Activated naive CD4-positive, alpha-beta T cell treated with anti-CD3 and anti-CD28 coated beads for 36 hours (primary cell): ENCODE measurements at regions of chr3 and their contacts with region 1.

Region 1: GRCh38 chr3:100708967-100709841 is at the start of gene TFG:
- DNase-seq: peak; percentile 98
- H3K4me3 Mint-ChIP-seq: peak within 1 kb of the TSS; percentile 83
- H3K27ac Mint-ChIP-seq: peak within 1 kb of the TSS; percentile 97
- H3K4me1 Mint-ChIP-seq: peaks cover 39% of the 10 kb centered on the region
- H3K27me3 Mint-ChIP-seq: peaks cover 6% of the 10 kb centered on the region
- total RNA-seq, gene TFG: 45.6 to 46.0 TPM

Region 2: DNA sequence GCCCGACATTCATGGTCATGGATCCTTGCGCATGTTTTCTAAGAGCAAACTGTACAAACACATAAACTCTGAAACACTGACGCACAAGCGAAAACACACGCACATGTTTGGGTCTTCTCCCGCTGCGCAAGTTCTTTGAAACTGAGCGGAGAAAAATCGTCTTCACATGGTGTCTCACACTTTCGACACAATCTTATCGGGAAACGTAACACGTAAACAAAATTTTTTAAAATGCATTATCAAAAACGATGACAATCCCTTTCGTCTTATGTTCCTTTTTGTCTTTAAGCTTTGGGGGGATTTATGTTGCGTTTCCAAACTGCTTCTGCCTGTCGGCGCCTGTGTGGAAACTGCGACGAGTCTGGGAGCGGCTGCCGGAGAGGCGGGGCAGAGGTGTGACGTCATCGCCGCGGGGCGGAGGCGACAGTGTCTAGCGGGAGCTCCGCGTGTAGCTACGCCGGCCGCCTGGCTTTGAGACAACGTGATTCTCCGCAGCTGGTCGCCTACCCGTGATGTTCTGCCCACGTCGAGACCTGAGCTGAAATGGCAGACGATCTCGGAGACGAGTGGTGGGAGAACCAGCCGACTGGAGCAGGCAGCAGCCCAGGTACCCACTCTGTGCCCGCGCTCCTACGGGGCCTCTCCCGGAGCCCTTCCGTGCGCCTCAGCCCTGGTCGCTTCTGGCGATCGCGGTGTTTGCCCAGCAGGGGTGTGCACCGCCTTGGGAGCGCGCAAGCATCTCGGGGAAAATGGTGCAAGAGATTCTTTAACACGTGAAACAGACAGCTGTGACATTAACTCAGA is 891.6 kb before region 1 on chr3 and contains the start of gene CMSS1:
- CTCF ChIA-PET with region 1: no interaction called
- intact Hi-C with region 1: loop called (anchors 2 kb)
- DNase-seq: peak; percentile 95
- H3K4me3 Mint-ChIP-seq: peak within 1 kb of the TSS; percentile 98
- H3K27ac Mint-ChIP-seq: peak within 1 kb of the TSS; percentile 98
- H3K4me1 Mint-ChIP-seq: peaks cover 39% of the 10 kb centered on the region
- H3K27me3 Mint-ChIP-seq: no peaks in the 10 kb centered on the region
- total RNA-seq, gene CMSS1: 95.8 to 106 TPM

Region 3: DNA sequence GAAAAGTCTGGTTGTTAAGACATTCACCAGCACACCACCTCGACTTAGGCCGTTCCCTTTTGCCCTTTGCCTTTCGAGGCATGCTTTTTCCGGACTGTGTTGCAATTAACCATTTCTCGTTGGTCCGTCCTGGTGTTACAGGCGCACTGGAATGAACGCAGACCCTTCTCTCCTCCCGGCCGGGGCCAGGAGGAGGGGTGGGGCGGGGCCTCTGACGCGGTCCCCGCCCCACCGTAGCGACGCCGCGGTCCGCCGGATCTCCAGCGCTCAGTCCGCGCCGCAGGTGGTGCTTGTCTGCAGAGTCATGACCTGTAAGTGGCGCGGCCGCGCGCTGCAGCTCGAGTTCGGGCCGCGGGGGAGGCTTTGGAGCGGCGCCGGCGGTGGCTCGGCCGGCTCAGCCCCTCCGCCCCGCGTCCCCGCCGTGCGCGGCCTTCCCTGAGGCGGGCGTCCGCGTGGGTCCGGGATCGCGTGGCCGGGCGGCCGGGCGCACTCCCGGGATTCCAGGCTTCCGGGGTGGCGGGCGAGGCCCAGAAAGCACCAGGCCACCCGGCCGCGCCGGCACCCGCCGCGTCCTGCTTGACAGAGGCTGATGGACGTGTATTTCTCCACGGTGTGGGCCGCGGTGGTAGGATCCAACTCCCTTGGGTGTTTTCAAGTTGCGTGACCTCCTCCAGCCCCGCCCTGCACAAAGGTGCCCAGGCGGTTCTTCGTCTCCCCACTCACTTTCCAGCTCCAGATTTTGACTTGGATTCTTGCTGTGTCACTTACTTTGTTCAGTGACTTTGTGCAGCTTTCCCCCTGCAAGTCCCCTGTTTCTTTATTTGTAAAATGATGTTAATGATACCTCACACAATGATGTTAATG is 374.5 kb before region 1 on chr3 and contains the start of gene NIT2:
- CTCF ChIA-PET with region 1: no interaction called
- intact Hi-C with region 1: loop called (anchors 1 kb)
- DNase-seq: peak; percentile 82
- H3K4me3 Mint-ChIP-seq: peak within 1 kb of the TSS; percentile 86
- H3K27ac Mint-ChIP-seq: peak within 1 kb of the TSS; percentile 86
- H3K4me1 Mint-ChIP-seq: peaks cover 26% of the 10 kb centered on the region
- H3K27me3 Mint-ChIP-seq: no peaks in the 10 kb centered on the region
- total RNA-seq, gene NIT2: 69.1 to 76.0 TPM

Region 4: DNA sequence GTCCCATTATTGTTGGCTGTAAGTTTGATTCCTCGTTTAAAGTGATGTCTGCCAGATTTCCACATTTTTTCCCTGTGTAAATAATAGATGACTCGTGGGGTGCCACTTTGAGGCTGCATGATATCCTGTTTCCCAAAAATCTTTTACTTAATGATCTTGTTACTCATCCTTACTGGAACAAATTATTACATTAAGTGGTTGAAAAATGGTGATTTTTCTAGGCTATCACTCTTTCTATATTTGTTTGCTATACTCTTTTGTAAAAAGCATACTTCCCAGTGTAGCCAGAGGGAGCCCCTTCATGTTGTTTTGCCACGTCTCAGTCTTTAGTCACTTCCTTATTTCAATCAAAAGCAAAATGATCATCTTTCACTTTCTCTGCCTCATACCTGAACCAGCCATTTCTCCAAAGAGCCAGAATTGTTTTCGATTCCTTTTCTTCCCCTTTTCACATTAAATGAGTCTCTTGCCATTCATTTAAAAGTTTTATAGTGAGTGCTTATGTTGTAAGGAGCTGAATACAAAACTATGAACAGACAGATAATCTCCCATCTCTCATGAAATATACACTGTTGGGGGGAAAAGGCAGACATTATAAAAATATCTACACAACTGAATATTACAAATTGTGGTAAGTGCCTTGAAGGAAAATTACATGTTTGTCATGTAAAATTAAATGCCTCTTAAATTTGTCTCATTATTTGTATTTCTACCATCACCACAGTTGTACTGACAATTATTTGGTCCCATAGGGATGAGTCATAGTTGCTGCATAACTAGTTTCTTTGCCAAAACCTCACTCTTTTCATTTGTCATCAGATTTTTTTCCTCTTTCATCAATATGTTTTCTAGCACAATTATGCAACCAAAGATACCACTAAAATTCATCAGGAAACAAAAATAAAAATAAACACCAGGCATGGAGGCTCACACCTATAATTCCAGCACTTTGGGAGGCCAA is 58.3 kb before region 1 on chr3:
- CTCF ChIA-PET with region 1: interaction called, 3 read pairs
- intact Hi-C with region 1: loop called (anchors 1 kb)
- DNase-seq: peak; percentile 57
- H3K4me3 Mint-ChIP-seq: peak overlapping the region; percentile 30
- H3K27ac Mint-ChIP-seq: peak overlapping the region; percentile 84
- H3K4me1 Mint-ChIP-seq: peaks cover 16% of the 10 kb centered on the region
- H3K27me3 Mint-ChIP-seq: no peaks in the 10 kb centered on the region

Region 5: DNA sequence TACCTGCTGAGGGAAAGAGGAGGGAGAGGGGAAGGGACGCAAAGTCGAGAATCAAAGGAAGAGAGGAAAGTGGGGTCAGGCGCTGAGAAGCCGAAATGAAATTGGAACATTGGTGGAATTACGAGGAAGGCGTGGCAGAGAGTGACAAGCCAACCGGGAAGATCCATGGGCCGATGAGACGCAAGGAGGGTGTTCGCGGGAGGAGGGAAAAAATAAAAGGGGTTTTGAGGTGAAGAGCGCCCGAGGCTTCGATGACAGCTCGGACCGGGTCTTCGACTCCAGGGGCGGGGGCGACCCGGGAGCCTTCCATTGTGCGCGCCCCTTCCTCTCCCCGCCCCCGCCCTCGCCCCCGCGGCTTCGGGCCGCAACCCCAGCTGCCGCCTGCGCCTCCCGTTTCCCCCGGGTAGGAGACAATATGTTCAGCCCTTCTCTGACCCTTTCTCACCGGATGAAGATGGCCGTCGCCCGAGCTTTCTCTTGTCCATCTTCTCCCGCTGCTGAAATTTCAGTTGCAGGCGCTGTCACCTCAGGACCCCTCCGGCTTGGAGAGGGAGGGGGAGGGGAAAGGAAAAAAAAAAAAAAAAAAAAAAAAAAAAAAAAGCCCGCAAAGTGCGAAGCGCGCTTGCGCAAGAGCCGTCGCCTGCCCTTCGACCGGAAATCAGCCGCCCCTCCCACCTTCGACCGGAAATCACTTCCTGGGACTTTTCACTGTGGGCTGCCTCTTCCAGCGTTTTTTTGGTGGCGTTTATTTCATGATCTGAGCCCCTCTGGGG is 803.6 kb after region 1 on chr3 and contains the start of gene SENP7:
- CTCF ChIA-PET with region 1: no interaction called
- intact Hi-C with region 1: loop called (anchors 1 kb)
- DNase-seq: peak; percentile 89
- H3K4me3 Mint-ChIP-seq: peak within 1 kb of the TSS; percentile 97
- H3K27ac Mint-ChIP-seq: peak within 1 kb of the TSS; percentile 97
- H3K4me1 Mint-ChIP-seq: peaks cover 50% of the 10 kb centered on the region
- H3K27me3 Mint-ChIP-seq: no peaks in the 10 kb centered on the region
- total RNA-seq, gene SENP7: 16.1 to 16.8 TPM